Gastrocnemius medialis (tissue), 4 donors: ENCODE measurements at regions of chr21 and their contacts with region 1.

Region 1: DNA sequence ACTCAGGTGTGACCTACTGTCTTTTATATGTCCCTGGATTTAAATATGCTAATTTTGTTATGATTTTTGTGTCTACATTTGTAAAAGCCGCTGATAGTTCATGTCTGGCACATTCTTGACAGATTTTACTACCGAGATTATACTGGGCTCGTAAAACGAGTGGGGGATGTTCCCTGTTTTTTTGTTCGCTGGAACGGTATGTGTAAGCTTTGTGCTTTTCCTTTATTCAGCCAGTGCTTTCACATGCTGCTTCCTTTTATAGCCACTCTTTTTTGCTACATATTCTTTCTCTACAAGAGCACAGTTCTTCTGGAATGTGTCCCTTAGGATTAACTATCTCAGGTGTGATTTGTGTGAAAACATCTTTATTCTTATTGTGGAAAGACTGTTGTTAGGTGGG is 46.6 kb downstream of the ADARB1 start:
- DNase-seq: no peak
- ATAC-seq: no peak
- H3K4me3 ChIP-seq: no peak overlapping the region
- H3K27ac ChIP-seq: no peak overlapping the region
- H3K4me1 ChIP-seq: peaks cover 6 to 9% of the 10 kb centered on the region in 2 donors
- H3K27me3 ChIP-seq: no peaks in the 10 kb centered on the region
- CTCF ChIP-seq: no peak
- POLR2A ChIP-seq: no peak

Region 2: DNA sequence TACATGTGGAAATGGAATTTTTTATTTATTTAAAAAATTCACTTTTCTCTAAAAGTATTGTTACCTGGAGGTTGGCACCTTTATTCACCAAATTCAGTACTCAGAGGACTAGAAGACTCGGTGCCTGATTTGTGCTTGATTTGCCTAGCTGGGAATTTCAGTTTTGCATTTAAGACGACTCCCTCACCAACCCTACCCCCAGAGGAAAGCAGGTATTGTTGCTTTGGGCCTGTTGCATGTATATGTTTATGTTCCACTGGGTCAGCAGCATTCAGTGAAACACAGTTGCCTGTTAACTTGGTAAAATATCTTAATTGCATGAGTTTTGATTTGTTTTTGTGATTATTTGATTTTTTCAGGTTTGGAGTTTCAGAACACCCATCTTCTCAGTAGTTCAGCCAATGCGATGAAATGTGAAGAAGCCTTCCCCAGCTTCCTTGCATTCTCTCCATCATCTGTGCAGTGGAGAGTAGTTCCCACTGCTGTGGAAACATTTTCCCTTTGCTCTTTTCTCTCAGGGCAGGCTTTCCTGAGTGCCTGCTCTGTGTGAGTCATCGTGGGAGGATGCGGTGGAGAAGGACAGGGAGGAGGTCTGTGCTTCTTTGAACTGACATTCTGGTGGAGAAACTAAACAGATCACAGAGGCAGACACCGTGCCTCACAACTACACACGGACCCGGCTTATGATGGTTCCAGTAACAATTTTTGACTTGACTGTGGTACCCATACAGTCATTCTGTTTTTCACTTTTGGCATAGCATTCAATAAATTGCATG is 40.1 kb before region 1 on chr21:
- in situ Hi-C with region 1: loop called in 2 of 4 experiments (anchors 5 to 10 kb)
- intact Hi-C with region 1: no loop called
- DNase-seq: no peak
- ATAC-seq: no peak
- H3K4me3 ChIP-seq: no peak overlapping the region
- H3K27ac ChIP-seq: no peak overlapping the region
- H3K4me1 ChIP-seq: peaks cover 6 to 21% of the 10 kb centered on the region in 2 donors
- H3K27me3 ChIP-seq: no peaks in the 10 kb centered on the region
- CTCF ChIP-seq: no peak
- POLR2A ChIP-seq: no peak